CD8-positive, alpha-beta T cell (primary cell): ENCODE measurements at regions of chr1 and their contacts with region 1.

Region 1: DNA sequence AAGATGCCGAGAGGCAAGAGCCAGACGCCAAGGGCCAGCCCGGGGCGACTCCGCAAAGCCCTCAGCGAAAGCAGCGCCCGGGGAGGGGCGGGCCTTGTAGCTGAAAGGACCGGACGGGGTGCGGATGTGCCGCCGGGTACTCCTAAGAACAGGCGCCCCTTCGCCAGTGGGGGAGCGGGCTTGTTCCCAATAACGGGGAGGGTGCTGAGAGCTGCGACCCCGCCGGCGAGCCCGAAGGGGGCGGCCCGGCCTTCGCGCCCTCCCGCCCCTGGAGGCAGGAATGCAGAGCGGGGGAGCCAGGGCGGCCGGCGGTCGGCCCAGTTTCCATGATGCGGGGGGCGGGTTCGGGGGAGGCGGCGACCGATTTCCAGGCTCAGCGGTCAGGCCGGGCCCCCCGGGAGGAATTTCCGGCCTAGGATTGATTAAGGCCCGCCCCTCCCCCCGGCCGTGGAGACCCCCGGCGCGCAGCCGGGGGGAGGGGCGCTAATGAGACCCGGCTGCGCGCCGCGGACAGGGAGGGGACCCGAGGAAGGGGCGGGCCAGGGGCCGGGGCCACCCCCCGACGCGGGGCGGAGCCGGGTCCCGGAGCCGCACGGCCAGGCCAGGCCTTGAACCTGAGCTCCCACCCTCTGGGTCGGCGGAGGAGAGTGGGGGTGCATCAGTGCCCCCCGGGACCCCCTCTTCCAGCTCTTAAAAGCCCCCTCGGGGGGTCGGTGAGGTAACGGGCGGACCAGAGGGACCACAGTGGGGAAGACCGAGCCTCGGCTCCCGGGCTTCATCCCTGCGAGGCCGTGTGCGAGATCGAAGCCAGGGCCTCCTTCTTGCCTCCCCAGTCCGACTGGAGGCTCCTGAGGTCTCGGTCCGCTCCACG is 898 bp upstream of the TMEM200B start:
- DNase-seq: peak; percentile 8 to 71 (median 50)
- ATAC-seq: peak; percentile 45
- H3K4me3 ChIP-seq: peak overlapping the region; percentile 55 to 66
- H3K4me3 Mint-ChIP-seq: peak overlapping the region; percentile 80
- H3K27ac ChIP-seq: no peak overlapping the region
- H3K27ac Mint-ChIP-seq: no peak overlapping the region
- H3K4me1 ChIP-seq: peaks cover 28% of the 10 kb centered on the region
- H3K4me1 Mint-ChIP-seq: peaks cover 13% of the 10 kb centered on the region
- H3K27me3 ChIP-seq: peaks cover 23 to 24% of the 10 kb centered on the region in 2 experiments
- H3K27me3 Mint-ChIP-seq: peaks cover 12% of the 10 kb centered on the region
- CTCF ChIP-seq: no peak

Region 2: GRCh38 chr1:28518000-28518744 is 606.4 kb before region 1 on chr1:
- CTCF ChIA-PET with region 1: no interaction called
- POLR2A ChIA-PET with region 1: no interaction called
- intact Hi-C with region 1: loop called in 1 of 2 experiments (anchors 5 kb)
- DNase-seq: peak; percentile 76 to 93 (median 88)
- ATAC-seq: peak; percentile 91
- H3K4me3 ChIP-seq: peak overlapping the region; percentile 59 to 79
- H3K4me3 Mint-ChIP-seq: peak overlapping the region; percentile 89
- H3K27ac ChIP-seq: peak overlapping the region; percentile 55 to 57
- H3K27ac Mint-ChIP-seq: peak overlapping the region; percentile 84
- H3K4me1 ChIP-seq: peaks cover 21% of the 10 kb centered on the region
- H3K4me1 Mint-ChIP-seq: peaks cover 28% of the 10 kb centered on the region
- H3K27me3 ChIP-seq: no peaks in the 10 kb centered on the region
- H3K27me3 Mint-ChIP-seq: no peaks in the 10 kb centered on the region
- CTCF ChIP-seq: peak; percentile 98

Region 3: GRCh38 chr1:29202584-29203340 is 78.2 kb after region 1 on chr1:
- CTCF ChIA-PET with region 1: interaction called, 11 read pairs
- POLR2A ChIA-PET with region 1: interaction called, 3 read pairs
- intact Hi-C with region 1: loop called (anchors 1 kb)
- DNase-seq: peak; percentile 67 to 95 (median 87)
- ATAC-seq: peak; percentile 84
- H3K4me3 ChIP-seq: no peak overlapping the region
- H3K4me3 Mint-ChIP-seq: no peak overlapping the region
- H3K27ac ChIP-seq: no peak overlapping the region
- H3K27ac Mint-ChIP-seq: no peak overlapping the region
- H3K4me1 ChIP-seq: no peaks in the 10 kb centered on the region
- H3K4me1 Mint-ChIP-seq: no peaks in the 10 kb centered on the region
- H3K27me3 ChIP-seq: no peaks in the 10 kb centered on the region
- H3K27me3 Mint-ChIP-seq: no peaks in the 10 kb centered on the region
- CTCF ChIP-seq: peak; percentile 93